PC-9 (cell line): ENCODE measurements at regions of chr10 and their contacts with region 1.

Region 1: DNA sequence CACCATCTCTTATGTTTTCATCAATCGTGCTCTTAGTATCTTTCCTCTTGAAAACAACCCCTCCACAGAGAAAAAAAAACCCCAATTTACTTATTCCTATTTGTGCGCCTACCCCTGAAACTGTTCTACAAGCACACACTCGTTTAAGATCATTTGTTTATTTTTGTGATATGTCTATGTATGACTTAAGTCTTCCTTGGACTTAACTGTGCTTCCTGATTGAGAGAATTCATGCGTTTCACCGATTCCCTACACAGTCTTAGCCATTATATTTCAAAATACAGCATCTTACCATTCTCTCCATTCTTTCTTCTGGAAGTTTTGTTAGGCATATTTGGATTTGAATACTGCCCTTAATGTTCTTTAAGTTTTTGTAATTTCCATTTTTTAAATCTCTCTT is 159.4 kb downstream of the MLLT10 start:
- DNase-seq: no peak
- H3K4me3 ChIP-seq: no peak overlapping the region
- H3K27ac ChIP-seq: no peak overlapping the region
- H3K4me1 ChIP-seq: no peaks in the 10 kb centered on the region
- H3K27me3 ChIP-seq: no peaks in the 10 kb centered on the region
- CTCF ChIP-seq: no peak

Region 2: GRCh38 chr10:21584834-21585530 is 108.4 kb before region 1 on chr10:
- CTCF ChIA-PET with region 1: no interaction called
- POLR2A ChIA-PET with region 1: interaction called, 18 read pairs
- intact Hi-C with region 1: no loop called
- DNase-seq: no peak
- H3K4me3 ChIP-seq: no peak overlapping the region
- H3K27ac ChIP-seq: no peak overlapping the region
- H3K4me1 ChIP-seq: no peaks in the 10 kb centered on the region
- H3K27me3 ChIP-seq: no peaks in the 10 kb centered on the region
- CTCF ChIP-seq: no peak

Region 3: GRCh38 chr10:21860718-21861117 is 167.3 kb after region 1 on chr10:
- CTCF ChIA-PET with region 1: no interaction called
- POLR2A ChIA-PET with region 1: no interaction called
- intact Hi-C with region 1: no loop called
- DNase-seq: no peak
- H3K4me3 ChIP-seq: no peak overlapping the region
- H3K27ac ChIP-seq: no peak overlapping the region
- H3K4me1 ChIP-seq: no peaks in the 10 kb centered on the region
- H3K27me3 ChIP-seq: no peaks in the 10 kb centered on the region
- CTCF ChIP-seq: no peak

Region 4: DNA sequence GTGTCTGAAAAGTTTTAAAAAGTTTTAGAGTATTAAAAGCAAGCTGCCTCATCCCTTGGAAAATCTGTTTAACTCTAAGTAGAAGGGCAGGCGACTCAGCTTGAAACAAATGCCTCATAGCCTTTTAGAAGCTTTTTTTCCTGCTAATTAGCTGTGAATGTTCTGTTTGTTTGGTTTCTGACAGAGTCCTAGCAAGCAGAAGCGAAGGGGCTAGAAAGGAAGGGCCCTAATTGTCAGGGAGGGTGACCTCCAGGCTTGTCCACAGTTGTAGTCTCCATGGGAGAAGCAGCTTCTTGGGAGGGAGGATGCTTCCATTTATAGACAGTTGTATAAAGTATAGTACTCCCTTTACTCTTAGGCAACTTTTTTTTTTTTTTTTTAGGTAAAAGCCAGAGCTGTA is 219.2 kb after region 1 on chr10:
- CTCF ChIA-PET with region 1: no interaction called
- POLR2A ChIA-PET with region 1: no interaction called
- intact Hi-C with region 1: no loop called
- DNase-seq: no peak
- H3K4me3 ChIP-seq: no peak overlapping the region
- H3K27ac ChIP-seq: no peak overlapping the region
- H3K4me1 ChIP-seq: no peaks in the 10 kb centered on the region
- H3K27me3 ChIP-seq: no peaks in the 10 kb centered on the region
- CTCF ChIP-seq: no peak